Breast epithelium (tissue), 4 donors: ENCODE measurements at regions of chr3 and their contacts with region 1.

Region 1: DNA sequence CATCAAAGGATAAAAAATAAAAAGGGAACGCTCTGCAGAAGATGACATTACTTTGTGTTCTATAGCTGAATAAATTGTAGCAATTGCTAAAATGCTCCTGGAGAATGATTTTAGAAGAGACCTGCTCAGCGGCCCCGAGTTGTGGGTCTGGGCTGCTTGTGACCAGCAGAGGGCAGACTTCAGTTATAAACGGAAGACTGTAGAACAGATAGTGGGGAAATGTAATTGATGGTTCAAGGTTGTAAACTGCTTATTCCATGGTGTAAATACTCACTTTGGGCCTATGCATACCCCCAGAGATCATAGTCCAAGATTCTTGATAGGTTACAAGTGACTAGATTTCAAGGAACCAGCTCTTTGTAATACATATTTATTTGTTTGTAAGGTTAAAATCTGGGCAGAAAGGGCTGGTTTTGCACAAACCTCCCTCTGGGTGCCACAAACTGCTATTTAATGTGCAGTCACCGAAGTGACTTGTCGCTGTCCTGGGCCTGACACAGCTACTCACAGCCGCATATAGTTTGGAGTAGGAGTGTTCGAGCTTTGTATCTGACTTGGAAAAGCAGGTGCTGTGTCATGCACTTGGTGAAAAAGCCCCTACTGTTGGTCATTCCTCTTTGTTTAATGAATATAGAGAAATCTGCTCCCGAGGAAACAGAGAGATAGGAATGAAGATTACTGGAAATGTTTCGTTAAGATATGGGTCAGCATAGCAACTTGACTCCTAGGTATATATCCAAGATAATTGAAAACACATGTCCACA is 34.7 kb upstream of the NDUFB4 start:
- DNase-seq: peak in 1 of 2 donors; percentile 32
- H3K4me3 ChIP-seq: no peak overlapping the region
- H3K27ac ChIP-seq: no peak overlapping the region
- H3K4me1 ChIP-seq: no peaks in the 10 kb centered on the region
- H3K27me3 ChIP-seq: no peaks in the 10 kb centered on the region
- CTCF ChIP-seq: peak; percentile 63 to 80 (median 68)
- POLR2A ChIP-seq: no peak

Region 2: GRCh38 chr3:120245386-120245785 is 316.0 kb before region 1 on chr3:
- intact Hi-C with region 1: loop called (anchors 2 kb)
- DNase-seq: no peak
- H3K4me3 ChIP-seq: no peak overlapping the region
- H3K27ac ChIP-seq: no peak overlapping the region
- H3K4me1 ChIP-seq: no peaks in the 10 kb centered on the region
- H3K27me3 ChIP-seq: no peaks in the 10 kb centered on the region
- CTCF ChIP-seq: no peak
- POLR2A ChIP-seq: no peak